ENCODE measurements at regions of chr17 and their contacts with region 1.

Region 1: DNA sequence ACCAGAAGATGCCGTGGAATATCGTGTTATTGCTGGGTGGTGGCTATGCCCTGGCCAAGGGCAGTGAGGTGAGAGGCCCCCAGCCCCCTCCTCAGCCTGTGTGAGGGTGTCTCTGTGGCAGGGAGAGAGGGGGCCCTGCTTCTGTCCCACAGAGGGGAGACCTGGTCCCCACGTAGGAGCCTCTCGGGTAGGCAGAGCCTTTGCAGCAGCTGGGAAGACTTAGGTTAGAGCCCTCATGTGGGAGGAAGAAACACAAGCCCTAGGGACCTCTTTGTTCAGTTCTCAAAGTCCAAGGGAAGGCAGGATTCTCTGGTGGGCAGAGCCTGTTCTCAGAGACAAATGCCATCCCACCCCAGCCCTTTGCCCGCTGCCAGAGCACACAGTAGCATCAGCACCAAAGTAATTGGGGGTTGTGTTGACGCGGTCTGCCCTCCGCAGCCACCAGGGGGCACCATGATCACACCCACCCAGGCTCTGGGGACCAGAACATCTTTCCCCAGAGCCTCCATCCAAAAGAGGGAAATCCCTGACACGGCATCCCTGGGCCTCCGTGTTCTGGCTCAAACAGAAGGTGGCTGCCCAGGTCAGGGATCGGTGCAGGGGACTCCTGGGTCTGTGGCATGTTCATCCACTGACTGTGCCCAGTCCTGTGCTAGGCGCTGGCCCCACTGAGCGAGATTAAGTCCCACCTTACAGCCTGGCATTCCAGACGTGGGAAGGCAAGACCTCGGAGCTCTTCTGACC is 11.5 kb upstream of the FOXN1 start:
- DNase-seq: peak; percentile 78

Region 2: DNA sequence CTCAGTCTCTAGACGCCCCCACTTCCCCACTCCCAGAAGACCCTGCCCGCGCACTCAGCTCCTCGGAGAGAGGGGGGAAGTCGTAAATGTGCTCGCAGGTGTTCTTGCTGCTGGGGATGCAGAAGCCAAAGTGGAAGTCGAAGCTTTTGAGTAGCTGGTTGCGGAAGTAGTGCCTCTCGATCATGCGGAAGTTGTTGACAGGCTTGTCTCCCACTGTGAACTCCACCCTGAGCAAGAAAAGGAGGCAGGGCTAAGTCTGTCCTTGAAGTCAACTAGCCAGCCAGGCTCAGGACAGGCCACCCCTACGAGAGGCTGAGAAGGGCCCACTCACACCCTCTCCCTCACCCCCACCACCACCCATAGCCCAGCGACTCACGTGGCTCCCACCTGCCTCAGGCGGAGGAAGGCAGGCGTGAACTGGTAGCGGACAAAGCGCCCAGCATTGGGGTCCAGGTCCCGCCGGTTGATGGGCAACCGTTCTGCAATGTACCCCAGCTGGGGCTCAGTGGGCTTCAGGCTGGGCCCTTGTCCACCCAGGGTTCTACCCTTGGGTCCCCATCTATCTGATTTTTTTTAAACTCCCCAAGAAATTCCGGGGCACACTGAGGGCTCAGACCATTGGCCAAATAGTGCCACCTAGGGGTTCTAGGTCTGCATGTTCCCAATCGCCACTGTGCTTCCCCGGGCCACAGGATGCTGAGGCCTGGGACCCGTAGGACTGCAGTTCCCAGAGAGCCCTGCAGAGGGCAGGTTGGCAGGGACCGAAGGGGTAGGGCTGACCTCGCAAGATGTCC is 53.2 kb after region 1 on chr17:
- in situ Hi-C with region 1: loop called (anchors 10 kb)
- DNase-seq: peak; percentile 81

Region 3: GRCh38 chr17:28612936-28613872 is 118.6 kb after region 1 on chr17:
- in situ Hi-C with region 1: no loop called
- DNase-seq: peak; percentile 32